ENCODE measurements at regions of chr1 and their contacts with region 1.

Region 1: GRCh38 chr1:7669559-7670311 is 101.4 kb upstream of the VAMP3 start:
- DNase-seq: peak; percentile 66

Region 2: GRCh38 chr1:7752512-7753417 is 83.0 kb after region 1 on chr1:
- in situ Hi-C with region 1: loop called (anchors 10 kb)
- DNase-seq: peak; percentile 72

Measured in KBM-7 (cell line).